Calu3 (cell line): ENCODE measurements at regions of chr6 and their contacts with region 1.

Region 1: DNA sequence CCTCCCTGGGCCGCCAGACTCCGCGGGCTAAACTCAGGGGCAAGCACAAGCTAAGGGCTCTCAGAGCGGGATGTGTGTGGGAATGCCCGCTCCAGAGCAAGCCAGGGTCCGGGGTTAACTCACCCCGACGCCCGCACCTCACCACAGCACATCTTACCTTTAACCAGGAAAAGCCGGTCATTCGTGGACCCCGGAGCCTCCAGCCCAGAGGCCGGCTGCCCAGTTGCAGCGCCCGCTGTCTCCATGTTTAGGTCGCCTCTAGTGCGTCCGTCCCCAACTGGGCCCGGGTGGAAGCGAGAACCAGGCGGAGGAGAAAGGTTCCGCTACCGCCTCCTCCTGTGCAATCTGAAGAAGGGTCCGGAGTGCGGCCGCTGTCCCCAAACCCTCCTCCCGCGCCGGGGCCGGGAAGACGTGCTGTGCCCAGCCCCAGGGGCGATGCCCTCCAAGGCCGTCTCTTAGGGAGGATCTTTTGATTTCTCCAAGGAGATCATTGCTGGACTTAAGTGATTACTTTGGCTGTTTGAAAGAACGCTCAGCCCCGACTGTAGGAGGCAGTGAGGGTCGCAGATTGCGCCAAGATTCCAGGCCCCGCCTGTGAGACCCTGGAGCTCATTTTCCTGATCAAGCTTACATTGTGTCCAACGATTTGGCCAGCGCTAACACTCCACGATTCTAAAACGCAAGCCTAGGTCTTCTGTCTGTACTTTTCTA is at the start of gene TMEM242:
- DNase-seq: peak; percentile 90
- H3K4me3 Mint-ChIP-seq: peak within 1 kb of the TSS; percentile 83
- H3K27ac Mint-ChIP-seq: peak within 1 kb of the TSS; percentile 60
- H3K4me1 Mint-ChIP-seq: peaks cover 21% of the 10 kb centered on the region
- H3K27me3 Mint-ChIP-seq: no peaks in the 10 kb centered on the region
- CTCF ChIP-seq: no peak
- total RNA-seq, gene TMEM242: 7.9 and 9.9 TPM in 2 replicates

Region 2: GRCh38 chr6:157379656-157380454 is 56.4 kb after region 1 on chr6:
- CTCF ChIA-PET with region 1: no interaction called
- intact Hi-C with region 1: loop called (anchors 5 kb)
- DNase-seq: peak; percentile 83
- H3K4me3 Mint-ChIP-seq: peak overlapping the region; percentile 80
- H3K27ac Mint-ChIP-seq: peak overlapping the region; percentile 69
- H3K4me1 Mint-ChIP-seq: peaks cover 20% of the 10 kb centered on the region
- H3K27me3 Mint-ChIP-seq: no peaks in the 10 kb centered on the region
- CTCF ChIP-seq: no peak

Region 3: DNA sequence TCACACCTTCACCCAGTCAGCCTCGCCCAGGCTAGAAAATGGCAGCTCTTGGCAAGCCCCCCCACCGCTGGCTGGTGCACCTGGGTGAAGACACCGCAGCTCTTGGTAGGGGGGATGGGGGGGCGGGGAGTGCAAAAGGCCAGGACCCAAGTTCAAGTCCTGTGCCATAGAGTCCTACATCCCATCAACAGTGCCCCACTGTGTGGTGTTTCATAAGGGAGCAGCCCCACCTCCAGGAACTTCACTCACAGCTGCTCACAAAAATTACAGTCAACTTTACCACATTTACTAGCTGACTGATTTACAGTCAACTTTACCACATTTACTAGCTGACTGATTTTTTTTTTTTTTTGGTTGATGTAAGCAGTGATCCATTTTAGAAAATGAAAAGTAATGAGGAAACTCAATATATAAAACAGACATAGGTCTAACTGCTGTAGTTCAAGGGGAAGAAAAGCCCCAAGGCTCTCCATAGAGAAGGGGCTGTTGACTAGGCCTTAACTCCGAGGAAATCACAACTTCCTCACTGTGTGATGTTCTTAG is 290.7 kb after region 1 on chr6:
- CTCF ChIA-PET with region 1: interaction called, 12 read pairs
- intact Hi-C with region 1: loop called (anchors 5 kb)
- DNase-seq: peak; percentile 17
- H3K4me3 Mint-ChIP-seq: peak overlapping the region; percentile 53
- H3K27ac Mint-ChIP-seq: peak overlapping the region; percentile 91
- H3K4me1 Mint-ChIP-seq: peaks cover 37% of the 10 kb centered on the region
- H3K27me3 Mint-ChIP-seq: no peaks in the 10 kb centered on the region
- CTCF ChIP-seq: no peak